Ovary (tissue), 10 donors: ENCODE measurements at regions of chr6 and their contacts with region 1.

Region 1: DNA sequence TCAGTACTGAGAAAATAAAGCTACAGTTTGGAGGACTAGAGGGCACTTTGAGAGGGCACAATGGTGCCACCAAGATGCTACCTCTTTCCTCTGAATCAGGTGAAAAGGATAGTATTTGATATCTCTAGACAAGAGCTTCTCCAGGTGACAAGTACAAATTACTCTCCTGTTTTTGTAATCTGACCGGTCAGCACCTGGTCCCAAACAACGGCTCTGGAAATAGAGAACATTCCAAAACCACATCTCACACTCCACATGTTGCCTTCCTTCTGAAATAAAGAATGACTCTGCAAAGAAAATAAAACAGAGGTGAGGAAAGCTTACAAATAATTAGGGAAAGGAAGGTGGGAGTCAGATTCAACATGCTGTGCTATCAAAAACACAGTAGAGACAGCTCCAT is 51.3 kb upstream of the CITED2 start:
- DNase-seq: no peak
- H3K4me3 ChIP-seq: no peak overlapping the region
- H3K27ac ChIP-seq: no peak overlapping the region
- H3K4me1 ChIP-seq: no peaks in the 10 kb centered on the region
- H3K27me3 ChIP-seq: no peaks in the 10 kb centered on the region
- CTCF ChIP-seq: no peak
- EP300 ChIP-seq: no peak
- POLR2A ChIP-seq: no peak

Region 2: GRCh38 chr6:139448051-139448649 is 22.4 kb after region 1 on chr6:
- intact Hi-C with region 1: loop called in 1 of 4 experiments (anchors 1 kb)
- DNase-seq: no peak
- H3K4me3 ChIP-seq: no peak overlapping the region
- H3K27ac ChIP-seq: peak overlapping the region in 1 of 2 donors; percentile 28
- H3K4me1 ChIP-seq: peaks cover 9% of the 10 kb centered on the region
- H3K27me3 ChIP-seq: no peaks in the 10 kb centered on the region
- CTCF ChIP-seq: no peak
- EP300 ChIP-seq: no peak
- POLR2A ChIP-seq: no peak

Region 3: DNA sequence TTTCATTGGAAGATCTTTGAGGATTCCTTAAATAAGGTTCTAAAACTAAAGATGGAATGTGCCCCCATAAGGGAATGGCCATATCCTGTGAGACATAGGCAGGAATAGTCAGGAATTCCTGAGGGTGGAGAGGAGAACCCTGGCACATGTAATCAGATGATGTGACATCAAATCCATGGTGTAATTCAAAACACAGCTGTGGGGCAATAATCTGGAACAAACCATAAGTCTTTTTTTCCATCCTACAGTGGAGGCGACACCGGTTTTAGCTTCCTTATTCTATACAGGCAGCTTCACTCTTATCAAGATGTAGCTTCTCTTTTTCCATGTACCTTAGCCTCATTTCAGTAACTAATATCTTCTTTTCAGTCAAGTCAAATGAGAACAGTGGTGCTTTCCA is 82.2 kb after region 1 on chr6:
- intact Hi-C with region 1: no loop called
- DNase-seq: no peak
- H3K4me3 ChIP-seq: no peak overlapping the region
- H3K27ac ChIP-seq: no peak overlapping the region
- H3K4me1 ChIP-seq: peaks cover 2% of the 10 kb centered on the region
- H3K27me3 ChIP-seq: no peaks in the 10 kb centered on the region
- CTCF ChIP-seq: no peak
- EP300 ChIP-seq: no peak
- POLR2A ChIP-seq: no peak